Activated naive CD4-positive, alpha-beta T cell treated with anti-CD3 and anti-CD28 coated beads, Interleukin-2, amount 10 ng/mL, durations not matched to agents 7 days and 5 days (primary cell): ENCODE measurements at regions of chr4 and their contacts with region 1.

Region 1: GRCh38 chr4:142282870-142283431 is 563.1 kb downstream of the INPP4B start:
- DNase-seq: peak; percentile 27
- H3K4me3 Mint-ChIP-seq: no peak overlapping the region
- H3K27ac Mint-ChIP-seq: no peak overlapping the region
- H3K4me1 Mint-ChIP-seq: peaks cover 10% of the 10 kb centered on the region
- H3K27me3 Mint-ChIP-seq: no peaks in the 10 kb centered on the region

Region 2: DNA sequence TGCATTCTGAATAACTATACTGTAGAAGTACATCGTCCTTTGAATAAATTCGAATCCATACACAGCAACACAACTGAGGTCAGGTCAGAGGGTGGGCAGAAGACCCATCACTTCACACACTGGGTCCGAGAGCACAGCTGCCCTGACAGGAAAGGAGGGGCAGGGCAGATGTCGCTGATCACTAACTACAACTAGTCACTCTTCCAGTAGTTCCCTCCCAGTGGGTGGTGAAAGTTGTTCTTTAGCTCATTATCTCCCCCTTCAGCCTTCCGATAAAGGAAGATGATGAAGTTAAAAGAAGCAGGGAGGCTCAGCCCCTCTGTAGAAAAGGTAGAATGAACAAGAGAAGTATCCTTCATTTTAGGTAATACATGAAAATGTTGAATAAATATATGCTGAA is 284.2 kb after region 1 on chr4:
- CTCF ChIA-PET with region 1: interaction called, 11 read pairs
- DNase-seq: peak; percentile 63
- H3K4me3 Mint-ChIP-seq: peak overlapping the region; percentile 80
- H3K27ac Mint-ChIP-seq: peak overlapping the region; percentile 90
- H3K4me1 Mint-ChIP-seq: peaks cover 66% of the 10 kb centered on the region
- H3K27me3 Mint-ChIP-seq: no peaks in the 10 kb centered on the region

Region 3: GRCh38 chr4:142719854-142720541 is 437.0 kb after region 1 on chr4:
- CTCF ChIA-PET with region 1: interaction called, 12 read pairs
- DNase-seq: peak; percentile 25
- H3K4me3 Mint-ChIP-seq: no peak overlapping the region
- H3K27ac Mint-ChIP-seq: peak overlapping the region; percentile 55
- H3K4me1 Mint-ChIP-seq: peaks cover 40% of the 10 kb centered on the region
- H3K27me3 Mint-ChIP-seq: no peaks in the 10 kb centered on the region